Sigmoid colon (tissue), 7 donors: ENCODE measurements at regions of chr10 and their contacts with region 1.

Region 1: DNA sequence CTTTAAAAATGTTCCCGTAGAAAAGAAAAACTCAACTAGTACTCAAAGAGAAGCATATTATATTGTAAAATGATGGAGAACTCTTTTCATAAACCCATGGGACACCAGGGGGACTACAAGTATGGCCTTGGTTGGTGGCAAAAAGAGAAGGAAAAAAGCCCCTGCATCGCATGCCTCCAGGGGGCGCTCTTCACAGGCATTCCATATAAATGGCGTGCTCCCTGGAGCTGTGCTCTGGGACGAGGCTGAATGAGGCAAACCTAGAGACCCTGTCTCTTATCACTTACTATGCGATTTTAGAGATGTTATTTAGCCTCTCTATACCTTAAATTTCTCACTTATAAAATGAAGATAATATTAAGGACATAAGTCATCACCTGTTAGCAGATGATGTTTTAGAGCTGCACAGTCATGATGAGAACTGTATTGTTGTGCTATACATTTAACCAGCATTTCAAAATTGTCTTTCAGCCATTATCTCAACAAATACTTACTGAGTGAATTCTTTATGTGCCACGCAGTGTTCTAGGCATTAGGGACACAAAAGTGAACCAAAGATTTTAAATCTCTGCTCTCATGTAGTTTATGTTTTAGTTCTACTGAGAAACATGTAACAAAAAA is 105.8 kb downstream of the ARHGAP21 start:
- DNase-seq: peak; percentile 71
- H3K4me3 ChIP-seq: no peak overlapping the region
- H3K27ac ChIP-seq: no peak overlapping the region
- H3K4me1 ChIP-seq: peaks cover 0 to 3% (median 0%) of the 10 kb centered on the region in 4 donors
- H3K27me3 ChIP-seq: no peaks in the 10 kb centered on the region
- CTCF ChIP-seq: peak in 3 of 4 experiments; percentile 64 to 88 (median 65)
- EP300 ChIP-seq: no peak
- POLR2A ChIP-seq: no peak

Region 2: GRCh38 chr10:25080880-25081581 is 463.1 kb after region 1 on chr10:
- intact Hi-C with region 1: loop called (anchors 5 kb)
- DNase-seq: peak; percentile 88
- H3K4me3 ChIP-seq: no peak overlapping the region
- H3K27ac ChIP-seq: peak overlapping the region in 3 of 4 donors; percentile 47 to 55 (median 48)
- H3K4me1 ChIP-seq: peaks cover 0 to 19% (median 11%) of the 10 kb centered on the region in 4 donors
- H3K27me3 ChIP-seq: no peaks in the 10 kb centered on the region
- CTCF ChIP-seq: peak; percentile 75 to 87 (median 83)
- EP300 ChIP-seq: no peak
- POLR2A ChIP-seq: no peak